ENCODE measurements at regions of chr9 and their contacts with region 1.

Region 1: GRCh38 chr9:134135343-134136118 is at the start of gene WDR5:
- DNase-seq: peak; percentile 84
- H3K4me3 ChIP-seq: peak within 1 kb of the TSS; percentile 84 to 95 (median 89)
- H3K27ac ChIP-seq: peak within 1 kb of the TSS; percentile 57
- H3K4me1 ChIP-seq: peaks cover 30% of the 10 kb centered on the region
- H3K27me3 ChIP-seq: no peaks in the 10 kb centered on the region
- CTCF ChIP-seq: peak in 1 of 2 donors; percentile 21
- total RNA-seq, gene WDR5: 22.3 to 37.9 TPM

Region 2: DNA sequence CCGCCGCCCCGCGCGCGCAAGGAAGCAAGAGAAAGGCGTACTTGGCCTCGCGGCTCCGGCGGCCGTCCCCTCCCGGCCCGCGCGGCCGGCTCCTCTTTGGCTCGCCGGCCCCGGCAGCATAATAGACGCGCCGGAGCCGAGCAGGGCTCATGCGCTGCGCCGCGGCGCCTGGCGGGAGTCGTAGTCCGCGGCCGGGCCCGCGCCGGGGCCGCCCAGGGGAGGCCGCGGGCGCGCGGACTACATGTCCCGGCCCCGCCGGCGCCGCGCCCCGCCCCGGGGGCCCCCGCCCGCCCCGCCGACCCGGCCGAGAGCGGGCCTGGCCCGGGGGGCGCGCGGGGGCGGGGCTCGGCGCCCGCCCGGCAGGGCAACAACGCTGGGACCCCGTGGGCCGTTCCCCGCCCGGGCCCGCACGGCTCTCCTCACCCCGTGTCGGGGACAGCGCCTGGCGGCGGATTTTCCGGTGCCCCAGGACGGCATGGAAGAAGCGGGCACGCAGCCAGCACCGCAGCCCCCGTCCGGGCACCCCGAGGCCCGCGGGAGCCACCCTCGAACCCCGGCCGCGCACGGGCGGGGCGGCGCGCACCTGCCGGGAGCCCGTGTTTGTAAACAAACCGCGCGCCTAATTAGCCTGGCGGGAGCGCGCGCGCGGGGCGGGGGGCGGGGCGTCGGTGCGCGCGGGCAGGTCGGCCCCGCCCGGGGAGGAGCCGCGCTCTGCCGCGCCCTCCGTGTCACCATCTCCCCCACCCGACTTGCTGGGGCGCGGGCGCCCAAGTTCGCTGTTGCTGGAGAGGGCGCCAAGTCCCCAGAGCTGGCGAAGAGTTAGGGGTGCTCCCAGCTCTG is 67.4 kb before region 1 on chr9 and contains the start of gene BRD3:
- CTCF ChIA-PET with region 1: no interaction called
- dilution Hi-C with region 1: no loop called
- in situ Hi-C with region 1: no loop called
- intact Hi-C with region 1: loop called (anchors 1 kb)
- DNase-seq: peak; percentile 86
- H3K4me3 ChIP-seq: peak within 1 kb of the TSS; percentile 73 to 88 (median 75)
- H3K27ac ChIP-seq: peak within 1 kb of the TSS; percentile 67
- H3K4me1 ChIP-seq: peaks cover 7% of the 10 kb centered on the region
- H3K27me3 ChIP-seq: peaks cover 8% of the 10 kb centered on the region
- CTCF ChIP-seq: no peak
- total RNA-seq, gene BRD3: 3.3 to 17.3 TPM

Region 3: DNA sequence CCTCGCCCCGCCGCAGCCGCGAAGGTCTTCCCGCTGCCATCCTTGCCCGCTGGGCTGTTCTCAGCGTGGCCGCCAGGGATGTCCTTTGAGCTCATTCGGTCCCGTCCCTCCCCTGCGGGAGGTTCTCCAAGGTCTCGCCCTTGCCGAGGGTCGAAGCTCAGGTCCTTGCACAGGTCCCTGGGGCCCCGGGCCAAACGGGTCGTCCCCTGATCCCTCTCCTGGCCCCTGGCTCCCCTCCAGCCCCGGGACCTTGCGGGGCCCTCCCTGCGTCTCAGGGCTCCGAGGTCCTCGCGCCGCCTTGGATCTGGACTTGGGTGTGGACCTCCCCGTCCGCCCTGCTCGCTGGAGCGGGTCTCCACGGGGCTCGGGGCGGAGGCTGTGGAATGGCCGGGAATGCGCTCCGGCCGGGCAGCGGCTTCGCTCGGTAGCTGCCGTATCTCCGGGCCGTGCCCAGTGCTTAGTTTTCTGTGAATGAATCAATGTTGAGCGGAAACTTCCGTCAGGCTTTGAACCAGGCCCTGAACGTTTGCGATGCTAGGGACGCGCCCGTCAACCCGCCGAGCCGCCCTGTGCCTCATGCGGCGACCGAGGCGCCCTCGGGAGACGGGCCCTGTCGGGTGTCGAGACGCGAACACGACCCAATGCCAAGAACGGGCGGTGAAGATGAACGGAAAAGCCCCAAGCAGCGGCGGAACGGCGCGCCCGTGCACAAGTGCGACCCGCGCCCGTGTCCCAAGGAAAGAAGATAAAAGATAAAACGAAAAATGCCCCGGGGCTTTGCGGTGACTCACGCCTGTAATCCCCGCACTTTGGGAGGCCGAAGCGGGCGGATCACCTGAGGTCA is 28.0 kb after region 1 on chr9:
- CTCF ChIA-PET with region 1: interaction called, 4 read pairs
- dilution Hi-C with region 1: no loop called
- in situ Hi-C with region 1: no loop called
- intact Hi-C with region 1: loop called (anchors 1 kb)
- DNase-seq: peak; percentile 25
- H3K4me3 ChIP-seq: peak overlapping the region; percentile 24 to 45 (median 41)
- H3K27ac ChIP-seq: no peak overlapping the region
- H3K4me1 ChIP-seq: peaks cover 5% of the 10 kb centered on the region
- H3K27me3 ChIP-seq: no peaks in the 10 kb centered on the region
- CTCF ChIP-seq: peak in 1 of 2 donors; percentile 13

Measured in mammary epithelial cell (primary cell).